ENCODE measurements at regions of chr2 and their contacts with region 1.

Region 1: GRCh38 chr2:158006961-158007719 is 94.5 kb upstream of the UPP2 start:
- DNase-seq: no peak
- ATAC-seq: no peak
- H3K4me3 ChIP-seq: no peak overlapping the region
- H3K27ac ChIP-seq: no peak overlapping the region
- H3K4me1 ChIP-seq: peaks cover 17% of the 10 kb centered on the region
- H3K27me3 ChIP-seq: no peaks in the 10 kb centered on the region
- CTCF ChIP-seq: peak; percentile 24; the same call in 1 of the 2 replicates

Region 2: DNA sequence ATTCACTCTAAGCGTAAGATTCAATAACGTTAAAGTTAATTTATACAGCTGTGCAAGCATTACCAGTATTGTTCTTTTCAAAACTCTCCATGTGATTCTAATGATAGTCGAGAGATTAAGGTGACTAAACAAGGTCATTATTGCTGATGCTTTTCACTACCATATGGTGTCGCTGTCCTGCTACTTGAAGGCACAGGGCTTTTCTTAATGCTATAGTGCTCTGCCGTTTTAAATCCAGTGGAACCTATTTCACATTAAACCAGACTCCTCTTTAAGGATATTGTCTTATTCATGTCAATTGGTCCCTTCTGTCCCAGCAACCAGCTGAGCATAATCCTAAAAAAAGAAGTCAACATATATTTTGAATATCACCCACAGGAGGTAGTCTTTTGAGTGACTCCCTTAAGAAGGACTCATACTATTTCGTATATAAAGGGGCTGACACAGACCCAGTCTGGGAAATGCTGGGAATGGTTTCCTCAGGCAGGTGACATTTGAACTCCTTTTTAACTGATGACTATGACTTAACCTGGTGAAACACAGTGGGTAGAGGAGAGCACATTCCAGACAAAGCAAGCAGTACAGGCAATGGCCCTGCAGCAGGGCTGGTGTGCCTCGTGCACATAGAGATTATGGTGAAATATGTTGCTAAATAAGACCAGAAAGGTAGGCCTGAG is 509.4 kb before region 1 on chr2:
- CTCF ChIA-PET with region 1: no interaction called
- POLR2A ChIA-PET with region 1: no interaction called
- intact Hi-C with region 1: loop called (anchors 1 kb)
- DNase-seq: peak; percentile 57
- ATAC-seq: peak; percentile 79
- H3K4me3 ChIP-seq: no peak overlapping the region
- H3K27ac ChIP-seq: no peak overlapping the region
- H3K4me1 ChIP-seq: no peaks in the 10 kb centered on the region
- H3K27me3 ChIP-seq: no peaks in the 10 kb centered on the region
- CTCF ChIP-seq: peak; percentile 87

Region 3: DNA sequence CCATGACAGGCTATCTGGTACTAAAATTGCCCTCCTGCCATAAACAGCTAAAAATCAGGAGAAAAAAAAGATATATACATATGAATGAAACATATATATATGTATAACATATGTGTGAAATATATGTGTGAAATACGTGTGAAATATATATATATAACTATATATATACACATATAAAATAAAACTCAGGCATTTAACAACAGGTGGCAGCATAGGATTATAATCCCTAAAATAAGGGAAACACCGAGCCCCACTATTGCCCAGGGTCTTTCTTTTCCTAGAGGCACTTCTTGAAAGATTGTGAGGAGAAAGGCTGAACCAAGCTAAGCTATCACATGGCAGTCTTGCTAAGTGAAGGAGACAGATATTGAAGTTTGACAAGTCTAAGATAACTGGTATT is 497.4 kb before region 1 on chr2:
- CTCF ChIA-PET with region 1: no interaction called
- POLR2A ChIA-PET with region 1: no interaction called
- intact Hi-C with region 1: loop called (anchors 5 kb)
- DNase-seq: peak; percentile 37
- ATAC-seq: no peak
- H3K4me3 ChIP-seq: no peak overlapping the region
- H3K27ac ChIP-seq: no peak overlapping the region
- H3K4me1 ChIP-seq: no peaks in the 10 kb centered on the region
- H3K27me3 ChIP-seq: 0 out of 2 replicates have a peak, but pooled peaks cover 6% of the 10 kb centered on the region
- CTCF ChIP-seq: peak; percentile 32; the same call in 1 of the 2 replicates

Region 4: DNA sequence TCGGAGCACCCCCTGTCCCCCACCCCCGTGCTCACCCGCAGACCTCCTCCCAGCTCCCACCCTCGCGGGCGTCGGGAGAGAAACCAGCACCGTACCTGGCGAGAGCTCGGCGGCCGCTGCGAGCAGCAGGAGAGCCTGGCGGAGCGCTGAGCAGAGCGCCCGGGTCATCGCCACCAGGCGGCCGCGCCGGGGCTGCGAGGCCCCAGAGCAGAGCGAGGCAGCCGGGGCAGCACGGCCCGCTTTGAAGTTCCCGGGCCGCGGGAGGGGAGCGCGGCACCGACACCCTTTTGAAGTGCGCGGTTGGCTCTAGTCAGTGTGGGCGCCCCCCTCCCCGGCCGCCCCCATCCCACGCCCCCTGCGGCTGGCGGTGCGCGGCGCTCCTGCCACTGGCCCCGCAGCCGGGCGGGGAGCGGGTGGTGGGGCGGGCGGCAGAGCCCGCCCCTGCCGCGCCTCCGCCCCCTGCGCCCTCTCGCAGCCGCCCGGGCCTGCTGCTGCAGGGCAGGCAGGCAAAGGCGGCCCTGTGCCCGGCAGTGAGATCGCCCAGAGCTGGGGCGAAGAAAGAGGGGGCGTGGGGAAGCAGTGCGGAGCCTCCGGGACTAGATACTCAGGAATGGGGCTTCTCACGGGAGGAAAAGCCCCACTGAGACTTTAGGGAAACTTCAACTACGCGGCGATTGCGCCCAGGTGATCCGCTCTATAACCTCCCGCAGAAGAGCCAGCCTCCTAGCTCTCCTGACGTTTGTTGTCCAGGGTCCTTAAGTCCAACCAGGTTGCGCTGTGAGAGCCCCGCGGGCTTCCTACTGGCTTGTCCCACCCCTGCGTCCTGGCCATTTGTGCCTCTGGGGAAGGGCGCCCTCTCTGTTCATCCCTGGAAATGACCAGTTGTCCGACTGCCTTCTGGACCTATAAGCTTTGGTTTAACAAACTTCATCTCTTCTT is 378.4 kb before region 1 on chr2 and contains the start of gene ACVR1C:
- CTCF ChIA-PET with region 1: no interaction called
- POLR2A ChIA-PET with region 1: no interaction called
- intact Hi-C with region 1: loop called (anchors 5 kb)
- DNase-seq: peak; percentile 65
- ATAC-seq: peak; percentile 95
- H3K4me3 ChIP-seq: peak within 1 kb of the TSS; percentile 71
- H3K27ac ChIP-seq: no peak within 1 kb of the TSS
- H3K4me1 ChIP-seq: peaks cover 9% of the 10 kb centered on the region; the same call in 1 of the 2 replicates
- H3K27me3 ChIP-seq: peaks cover 22% of the 10 kb centered on the region
- CTCF ChIP-seq: peak; percentile 77
- total RNA-seq, gene ACVR1C: 0.17 and 0.40 TPM in 2 replicates

Region 5: DNA sequence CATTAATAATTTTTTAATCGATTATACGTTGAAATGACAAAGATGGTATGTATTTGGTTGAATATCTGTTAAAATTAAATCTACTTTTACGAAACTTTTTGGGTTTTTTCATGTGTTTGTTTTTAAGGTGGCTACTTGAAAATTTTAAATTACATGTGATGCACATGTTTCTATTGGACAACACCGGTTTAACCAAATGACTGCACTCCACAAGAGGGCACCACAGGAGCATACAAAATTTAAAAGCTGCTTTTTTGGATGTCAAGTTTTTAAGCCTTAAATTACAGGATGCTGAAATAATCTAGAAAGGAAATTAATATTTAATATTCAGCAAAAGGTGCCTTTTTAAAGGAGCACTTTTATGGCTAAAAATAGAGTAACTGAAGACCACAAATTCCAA is 229.7 kb before region 1 on chr2:
- CTCF ChIA-PET with region 1: interaction called, 8 read pairs
- POLR2A ChIA-PET with region 1: no interaction called
- intact Hi-C with region 1: loop called (anchors 1 kb)
- DNase-seq: peak; percentile 77
- ATAC-seq: peak; percentile 37
- H3K4me3 ChIP-seq: no peak overlapping the region
- H3K27ac ChIP-seq: no peak overlapping the region
- H3K4me1 ChIP-seq: no peaks in the 10 kb centered on the region
- H3K27me3 ChIP-seq: no peaks in the 10 kb centered on the region
- CTCF ChIP-seq: peak; percentile 86

Region 6: GRCh38 chr2:157784169-157784822 is 222.8 kb before region 1 on chr2:
- CTCF ChIA-PET with region 1: interaction called, 8 read pairs
- POLR2A ChIA-PET with region 1: no interaction called
- intact Hi-C with region 1: loop called (anchors 2 kb)
- DNase-seq: peak; percentile 85
- ATAC-seq: peak; percentile 99
- H3K4me3 ChIP-seq: peak overlapping the region; percentile 56
- H3K27ac ChIP-seq: peak overlapping the region; percentile 77
- H3K4me1 ChIP-seq: peaks cover 19% of the 10 kb centered on the region
- H3K27me3 ChIP-seq: no peaks in the 10 kb centered on the region
- CTCF ChIP-seq: no peak

Region 7: GRCh38 chr2:157876066-157876787 is 130.9 kb before region 1 on chr2 and contains the start of gene ACVR1:
- CTCF ChIA-PET with region 1: no interaction called
- POLR2A ChIA-PET with region 1: no interaction called
- intact Hi-C with region 1: loop called (anchors 2 kb)
- DNase-seq: peak; percentile 97
- ATAC-seq: peak; percentile 82
- H3K4me3 ChIP-seq: peak within 1 kb of the TSS; percentile 87
- H3K27ac ChIP-seq: peak within 1 kb of the TSS; percentile 81
- H3K4me1 ChIP-seq: peaks cover 30% of the 10 kb centered on the region
- H3K27me3 ChIP-seq: no peaks in the 10 kb centered on the region
- CTCF ChIP-seq: no peak
- total RNA-seq, gene ACVR1: 6.7 and 9.0 TPM in 2 replicates

Measured in PC-3 (cell line).